ENCODE measurements at regions of chr4 and their contacts with region 1.

Region 1: DNA sequence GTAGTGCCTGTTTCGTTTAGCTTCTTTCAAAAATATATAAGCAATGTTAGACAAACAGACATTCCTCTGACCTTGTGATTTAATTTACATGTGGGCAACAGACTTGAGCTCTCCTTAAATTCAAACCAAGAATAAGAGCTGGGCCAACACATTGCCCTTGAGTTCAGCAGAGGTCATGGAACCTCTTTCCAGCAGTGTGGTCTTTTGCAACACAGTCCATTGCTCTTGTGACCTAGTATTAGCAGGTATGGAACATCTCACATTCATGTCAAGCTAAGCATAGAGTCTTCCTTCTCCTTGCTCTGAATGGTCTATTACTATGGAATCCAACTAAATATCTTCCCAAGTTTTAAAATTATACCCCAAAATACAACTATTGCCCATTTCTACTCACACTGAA is 33.7 kb upstream of the MND1 start:
- DNase-seq: no peak
- ATAC-seq: no peak
- H3K4me3 ChIP-seq: no peak overlapping the region
- H3K4me3 Mint-ChIP-seq: no peak overlapping the region
- H3K27ac ChIP-seq: no peak overlapping the region
- H3K27ac Mint-ChIP-seq: no peak overlapping the region
- H3K4me1 ChIP-seq: no peaks in the 10 kb centered on the region
- H3K4me1 Mint-ChIP-seq: no peaks in the 10 kb centered on the region
- H3K27me3 ChIP-seq: no peaks in the 10 kb centered on the region
- H3K27me3 Mint-ChIP-seq: no peaks in the 10 kb centered on the region

Region 2: DNA sequence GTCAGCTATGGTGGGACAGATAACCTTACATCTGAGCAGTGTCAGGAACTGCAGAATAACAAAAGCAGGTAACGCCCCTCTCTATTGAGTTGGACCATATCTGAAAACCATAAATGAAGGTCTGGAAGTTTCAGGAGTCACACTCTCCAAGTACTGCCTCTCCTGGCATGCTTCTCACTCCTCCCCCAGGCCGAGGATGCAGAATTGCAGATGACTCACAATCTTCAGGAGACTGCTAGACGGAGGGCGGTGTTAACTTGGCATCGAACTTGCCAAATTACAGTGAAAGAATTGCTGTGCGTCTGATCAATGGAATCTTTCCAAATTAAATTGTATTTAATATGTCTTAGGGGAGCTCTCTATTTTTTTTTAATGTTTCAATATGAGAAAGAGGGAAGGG is 173.6 kb before region 1 on chr4:
- CTCF ChIA-PET with region 1: interaction called in 1 of 2 experiments, 12 read pairs
- POLR2A ChIA-PET with region 1: no interaction called
- DNase-seq: no peak
- ATAC-seq: no peak
- H3K4me3 ChIP-seq: no peak overlapping the region
- H3K4me3 Mint-ChIP-seq: no peak overlapping the region
- H3K27ac ChIP-seq: no peak overlapping the region
- H3K27ac Mint-ChIP-seq: no peak overlapping the region
- H3K4me1 ChIP-seq: peaks cover 0 to 4% of the 10 kb centered on the region in 2 experiments
- H3K4me1 Mint-ChIP-seq: peaks cover 4 to 14% (median 8%) of the 10 kb centered on the region in 3 donors
- H3K27me3 ChIP-seq: peaks cover 0 to 18% of the 10 kb centered on the region in 2 experiments
- H3K27me3 Mint-ChIP-seq: peaks cover 0 to 3% of the 10 kb centered on the region in 2 donors

Region 3: DNA sequence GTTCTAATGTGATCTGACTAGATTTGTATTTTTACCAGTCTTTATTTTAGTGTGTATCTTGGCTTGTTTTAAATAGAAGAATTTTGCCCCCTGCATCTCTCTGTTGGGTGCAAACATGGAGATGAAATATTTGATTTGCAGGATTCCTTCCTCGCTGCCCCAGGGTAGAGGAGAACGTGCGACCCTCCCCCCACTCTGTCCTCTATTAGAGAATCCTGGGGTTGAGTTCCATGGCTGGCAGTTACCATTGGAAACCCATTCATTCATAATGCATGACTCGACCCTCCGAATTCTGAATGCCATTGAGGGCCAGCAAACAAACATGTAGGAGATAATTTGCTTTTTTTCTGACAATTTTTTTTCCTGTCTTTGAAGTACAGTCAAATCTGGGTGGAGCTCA is 52.8 kb before region 1 on chr4:
- CTCF ChIA-PET with region 1: interaction called in 1 of 2 experiments, 11 read pairs
- POLR2A ChIA-PET with region 1: no interaction called
- DNase-seq: no peak
- ATAC-seq: no peak
- H3K4me3 ChIP-seq: no peak overlapping the region
- H3K4me3 Mint-ChIP-seq: no peak overlapping the region
- H3K27ac ChIP-seq: no peak overlapping the region
- H3K27ac Mint-ChIP-seq: no peak overlapping the region
- H3K4me1 ChIP-seq: peaks cover 5 to 6% of the 10 kb centered on the region in 2 experiments
- H3K4me1 Mint-ChIP-seq: no peaks in the 10 kb centered on the region
- H3K27me3 ChIP-seq: peaks cover 2 to 3% of the 10 kb centered on the region in 2 experiments
- H3K27me3 Mint-ChIP-seq: peaks cover 8 to 17% of the 10 kb centered on the region in 2 donors

Region 4: GRCh38 chr4:153335665-153336064 is 24.9 kb after region 1 on chr4:
- CTCF ChIA-PET with region 1: no interaction called
- POLR2A ChIA-PET with region 1: no interaction called
- DNase-seq: no peak
- ATAC-seq: no peak
- H3K4me3 ChIP-seq: no peak overlapping the region
- H3K4me3 Mint-ChIP-seq: no peak overlapping the region
- H3K27ac ChIP-seq: no peak overlapping the region
- H3K27ac Mint-ChIP-seq: no peak overlapping the region
- H3K4me1 ChIP-seq: no peaks in the 10 kb centered on the region
- H3K4me1 Mint-ChIP-seq: no peaks in the 10 kb centered on the region
- H3K27me3 ChIP-seq: no peaks in the 10 kb centered on the region
- H3K27me3 Mint-ChIP-seq: peaks cover 0 to 4% of the 10 kb centered on the region in 2 donors

Region 5: GRCh38 chr4:153348006-153348405 is 37.2 kb after region 1 on chr4:
- CTCF ChIA-PET with region 1: no interaction called
- POLR2A ChIA-PET with region 1: no interaction called
- DNase-seq: no peak
- ATAC-seq: no peak
- H3K4me3 ChIP-seq: no peak overlapping the region
- H3K4me3 Mint-ChIP-seq: no peak overlapping the region
- H3K27ac ChIP-seq: no peak overlapping the region
- H3K27ac Mint-ChIP-seq: no peak overlapping the region
- H3K4me1 ChIP-seq: peaks cover 6 to 11% of the 10 kb centered on the region in 2 experiments
- H3K4me1 Mint-ChIP-seq: peaks cover 9 to 36% (median 17%) of the 10 kb centered on the region in 3 donors
- H3K27me3 ChIP-seq: no peaks in the 10 kb centered on the region
- H3K27me3 Mint-ChIP-seq: no peaks in the 10 kb centered on the region